Activated CD8-positive, alpha-beta T cell treated with anti-CD3 and anti-CD28 coated beads, Interleukin-2, amount 10 ng/mL, durations not matched to agents 7 days and 5 days (primary cell): ENCODE measurements at regions of chr3 and their contacts with region 1.

Region 1: DNA sequence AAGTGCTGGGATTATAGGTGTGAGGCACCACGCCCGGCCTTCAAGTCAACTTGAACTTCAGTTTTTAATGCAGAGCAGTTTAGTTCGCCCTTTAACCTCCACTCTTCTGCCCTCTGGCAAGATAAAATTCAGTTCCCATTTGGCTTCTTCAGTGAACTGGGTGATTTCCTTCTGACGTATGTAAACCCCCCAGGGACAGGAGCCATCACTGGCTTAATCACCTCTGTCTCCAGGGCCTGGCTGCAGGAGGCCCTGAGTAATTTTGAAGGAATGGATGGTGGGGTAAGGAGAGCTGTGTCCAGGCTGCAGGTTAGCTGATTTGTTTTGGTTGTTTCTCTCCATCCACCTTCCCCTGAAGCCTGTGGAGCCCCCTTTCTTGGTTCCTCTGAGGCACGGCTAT is 11.9 kb downstream of the MCM2 start:
- DNase-seq: no peak
- ATAC-seq: no peak
- H3K4me3 Mint-ChIP-seq: no peak overlapping the region
- H3K27ac Mint-ChIP-seq: no peak overlapping the region
- H3K4me1 Mint-ChIP-seq: peaks cover 31% of the 10 kb centered on the region
- H3K27me3 Mint-ChIP-seq: no peaks in the 10 kb centered on the region

Region 2: GRCh38 chr3:127351321-127351720 is 258.8 kb before region 1 on chr3:
- CTCF ChIA-PET with region 1: no interaction called
- POLR2A ChIA-PET with region 1: no interaction called
- DNase-seq: no peak
- ATAC-seq: no peak
- H3K4me3 Mint-ChIP-seq: no peak overlapping the region
- H3K27ac Mint-ChIP-seq: no peak overlapping the region
- H3K4me1 Mint-ChIP-seq: no peaks in the 10 kb centered on the region
- H3K27me3 Mint-ChIP-seq: peaks cover 7% of the 10 kb centered on the region

Region 3: DNA sequence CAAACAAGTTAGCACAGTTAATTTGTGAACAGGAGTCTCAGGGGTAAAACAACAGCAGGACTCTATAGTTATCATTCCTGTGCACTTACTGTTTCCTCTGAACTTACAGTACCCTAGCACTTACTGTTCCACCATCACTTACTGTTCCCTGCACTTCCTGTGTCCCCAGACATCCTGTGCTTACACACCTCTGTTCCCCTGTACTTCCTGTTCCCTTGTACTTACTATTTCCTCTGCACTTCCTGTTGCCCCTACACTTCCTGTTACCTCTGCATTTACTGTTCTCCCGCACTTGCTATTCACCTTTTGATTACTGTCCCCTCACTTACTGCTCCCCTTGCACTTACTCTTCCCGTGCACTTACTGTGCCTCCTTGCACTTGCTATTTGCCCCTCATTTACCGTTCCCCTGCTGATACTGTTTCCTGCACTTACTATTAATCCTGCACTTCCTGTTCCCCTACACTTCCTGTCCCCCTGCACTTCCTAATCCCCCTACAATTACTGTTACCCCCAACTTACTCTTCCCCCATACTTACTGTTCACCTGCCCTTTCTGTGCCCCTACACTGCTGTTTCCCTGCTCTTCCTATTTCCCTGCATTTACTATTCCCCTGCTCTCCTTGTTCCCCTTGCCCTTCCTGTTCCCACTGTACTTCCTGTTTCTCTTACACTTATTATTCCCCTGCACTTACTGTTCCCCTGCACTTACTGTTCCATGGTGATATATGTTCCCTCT is 49.9 kb before region 1 on chr3:
- CTCF ChIA-PET with region 1: no interaction called
- POLR2A ChIA-PET with region 1: no interaction called
- DNase-seq: peak; percentile 33
- ATAC-seq: peak; percentile 30
- H3K4me3 Mint-ChIP-seq: no peak overlapping the region
- H3K27ac Mint-ChIP-seq: peak overlapping the region; percentile 31
- H3K4me1 Mint-ChIP-seq: peaks cover 8% of the 10 kb centered on the region
- H3K27me3 Mint-ChIP-seq: peaks cover 9% of the 10 kb centered on the region

Region 4: DNA sequence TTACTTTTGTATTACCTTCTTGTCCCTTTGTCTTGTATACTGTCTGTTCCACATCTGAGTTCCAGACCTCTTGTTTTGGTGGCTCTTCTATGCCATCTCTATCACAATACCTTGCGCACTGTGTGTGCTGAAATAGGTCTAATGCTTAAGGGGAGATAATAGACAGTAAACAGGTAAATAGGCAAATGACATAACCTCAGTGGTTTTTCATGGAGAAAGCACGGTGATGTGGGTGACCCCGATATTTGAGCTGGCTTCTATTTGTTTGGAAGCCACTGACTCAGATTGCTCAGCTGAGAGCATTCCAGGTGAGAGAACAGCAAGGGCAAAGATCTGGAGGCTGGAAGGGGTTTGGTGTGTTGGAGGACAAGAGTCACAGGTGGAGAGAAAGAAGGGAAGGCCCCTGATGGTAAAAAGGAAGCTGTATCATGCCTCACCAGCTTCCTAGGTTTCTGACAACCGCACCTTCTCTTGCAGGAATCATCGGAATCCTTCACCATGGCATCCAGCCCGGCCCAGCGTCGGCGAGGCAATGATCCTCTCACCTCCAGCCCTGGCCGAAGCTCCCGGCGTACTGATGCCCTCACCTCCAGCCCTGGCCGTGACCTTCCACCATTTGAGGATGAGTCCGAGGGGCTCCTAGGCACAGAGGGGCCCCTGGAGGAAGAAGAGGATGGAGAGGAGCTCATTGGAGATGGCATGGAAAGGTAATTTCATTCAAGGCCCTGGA is 11.1 kb before region 1 on chr3:
- CTCF ChIA-PET with region 1: interaction called, 4 read pairs
- POLR2A ChIA-PET with region 1: interaction called, 16 read pairs
- DNase-seq: no peak
- ATAC-seq: no peak
- H3K4me3 Mint-ChIP-seq: peak overlapping the region; percentile 83
- H3K27ac Mint-ChIP-seq: peak overlapping the region; percentile 89
- H3K4me1 Mint-ChIP-seq: peaks cover 55% of the 10 kb centered on the region
- H3K27me3 Mint-ChIP-seq: no peaks in the 10 kb centered on the region

Region 5: GRCh38 chr3:127844326-127844942 is 234.3 kb after region 1 on chr3:
- CTCF ChIA-PET with region 1: no interaction called
- POLR2A ChIA-PET with region 1: no interaction called
- DNase-seq: no peak
- ATAC-seq: no peak
- H3K4me3 Mint-ChIP-seq: no peak overlapping the region
- H3K27ac Mint-ChIP-seq: no peak overlapping the region
- H3K4me1 Mint-ChIP-seq: no peaks in the 10 kb centered on the region
- H3K27me3 Mint-ChIP-seq: peaks cover 20% of the 10 kb centered on the region